CD4-positive, alpha-beta memory T cell (primary cell): ENCODE measurements at regions of chr1 and their contacts with region 1.

Region 1: GRCh38 chr1:156781585-156782186 is 14.4 kb downstream of the PRCC start:
- DNase-seq: no peak
- H3K4me3 ChIP-seq: no peak overlapping the region
- H3K4me3 Mint-ChIP-seq: no peak overlapping the region
- H3K27ac ChIP-seq: no peak overlapping the region
- H3K27ac Mint-ChIP-seq: peak overlapping the region in 4 of 7 donors; percentile 3 to 47 (median 34)
- H3K4me1 ChIP-seq: peaks cover 11% of the 10 kb centered on the region
- H3K4me1 Mint-ChIP-seq: peaks cover 17 to 35% (median 26%) of the 10 kb centered on the region in 4 donors
- H3K27me3 ChIP-seq: no peaks in the 10 kb centered on the region
- H3K27me3 Mint-ChIP-seq: no peaks in the 10 kb centered on the region

Region 2: DNA sequence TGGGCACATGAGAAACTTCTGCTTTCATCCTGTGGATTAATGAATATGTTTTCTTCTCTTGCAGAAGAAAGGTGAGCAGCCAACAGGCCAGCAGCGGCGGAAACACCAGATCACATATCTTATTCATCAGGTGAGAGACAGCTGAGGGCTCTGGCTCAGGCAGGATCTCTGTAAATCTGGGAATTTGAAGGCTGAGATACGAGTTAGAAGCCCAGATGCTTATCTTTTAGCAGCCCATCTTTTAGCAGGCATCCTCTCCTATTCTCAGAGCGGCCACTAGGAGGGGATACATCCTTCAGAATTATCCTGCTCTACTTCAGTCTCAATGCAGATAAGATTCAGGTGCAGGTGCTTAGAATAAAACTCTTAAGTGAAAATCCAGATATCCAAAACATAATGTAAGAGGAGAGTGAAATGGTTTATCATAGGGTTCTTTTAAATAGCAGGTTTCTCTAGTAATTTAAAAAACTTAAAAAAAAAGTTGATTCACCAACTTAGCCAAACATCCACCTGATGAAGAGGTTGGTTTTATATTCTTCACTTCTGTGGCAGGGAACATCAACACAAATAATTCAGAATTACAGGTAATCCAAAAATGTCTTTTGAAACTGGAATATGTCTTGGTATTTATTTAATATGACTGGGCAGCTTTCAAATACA is 15.7 kb after region 1 on chr1:
- CTCF ChIA-PET with region 1: interaction called, 10 read pairs
- POLR2A ChIA-PET with region 1: no interaction called
- intact Hi-C with region 1: no loop called
- DNase-seq: peak; percentile 66 to 75 (median 74)
- H3K4me3 ChIP-seq: no peak overlapping the region
- H3K4me3 Mint-ChIP-seq: no peak overlapping the region
- H3K27ac ChIP-seq: no peak overlapping the region
- H3K27ac Mint-ChIP-seq: peak overlapping the region in 6 of 7 donors; percentile 12 to 45 (median 24)
- H3K4me1 ChIP-seq: peaks cover 17% of the 10 kb centered on the region
- H3K4me1 Mint-ChIP-seq: peaks cover 18 to 30% (median 21%) of the 10 kb centered on the region in 4 donors
- H3K27me3 ChIP-seq: no peaks in the 10 kb centered on the region
- H3K27me3 Mint-ChIP-seq: no peaks in the 10 kb centered on the region

Region 3: DNA sequence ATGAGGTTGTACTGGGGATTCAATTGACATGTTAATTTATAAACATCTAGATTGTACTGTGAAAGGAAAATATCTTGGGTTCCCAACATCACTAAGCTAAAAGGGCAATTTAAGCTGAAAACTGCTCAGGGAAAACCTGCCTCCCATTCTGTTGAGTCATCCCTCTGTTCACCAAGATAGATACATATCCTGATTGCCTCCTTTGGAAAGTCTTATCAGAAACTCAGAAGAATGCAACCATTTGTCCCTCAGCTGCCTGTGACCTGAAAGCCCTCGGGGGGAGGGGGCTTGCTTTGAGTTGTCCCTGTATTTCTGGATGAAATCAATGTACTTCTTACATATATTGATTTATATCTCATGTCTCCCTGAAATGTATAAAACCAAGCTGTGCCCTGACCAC is 543.5 kb after region 1 on chr1:
- CTCF ChIA-PET with region 1: no interaction called
- POLR2A ChIA-PET with region 1: no interaction called
- intact Hi-C with region 1: no loop called
- DNase-seq: no peak
- H3K4me3 ChIP-seq: no peak overlapping the region
- H3K4me3 Mint-ChIP-seq: no peak overlapping the region
- H3K27ac ChIP-seq: no peak overlapping the region
- H3K27ac Mint-ChIP-seq: no peak overlapping the region
- H3K4me1 ChIP-seq: no peaks in the 10 kb centered on the region
- H3K4me1 Mint-ChIP-seq: no peaks in the 10 kb centered on the region
- H3K27me3 ChIP-seq: no peaks in the 10 kb centered on the region
- H3K27me3 Mint-ChIP-seq: peaks cover 4 to 7% of the 10 kb centered on the region in 2 donors